AG04449 (cell line): ENCODE measurements at regions of chr2 and their contacts with region 1.

Region 1: GRCh38 chr2:70871398-70872211 is 36.0 kb upstream of the CD207 start:
- DNase-seq: no peak
- H3K4me3 ChIP-seq: no peak overlapping the region
- CTCF ChIP-seq: peak; percentile 99

Region 2: DNA sequence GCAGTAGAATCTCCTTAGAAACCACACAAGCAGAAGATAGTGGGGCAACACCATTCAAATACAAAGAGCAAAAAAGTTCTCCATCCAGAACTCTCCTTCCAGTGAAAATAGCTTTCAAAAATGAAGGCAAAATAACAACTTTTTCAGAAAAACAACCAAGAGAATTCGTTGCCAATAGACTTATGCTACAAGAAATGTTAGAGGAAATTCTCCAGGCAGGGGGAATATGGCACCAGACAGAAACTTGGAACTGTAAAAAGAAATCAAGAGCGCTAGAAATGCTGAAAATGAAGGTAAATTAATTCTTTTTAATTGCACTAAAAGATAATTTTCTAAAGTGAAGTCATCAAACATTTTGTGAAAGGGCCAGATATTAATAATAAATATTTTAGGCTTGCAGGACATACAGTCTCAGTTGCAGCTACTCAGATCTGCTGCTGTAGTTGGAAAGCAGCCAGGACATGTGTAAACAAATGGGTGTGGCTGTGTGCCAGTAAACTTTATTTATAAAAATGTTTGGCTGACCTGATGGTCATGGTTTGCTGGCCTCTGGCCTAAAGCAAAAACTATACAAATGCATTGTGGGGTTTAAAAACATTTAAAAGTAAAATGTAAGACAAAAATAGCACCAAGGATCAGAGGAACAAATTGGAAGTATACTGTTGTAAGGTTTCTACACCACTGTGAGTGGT is 244.2 kb before region 1 on chr2:
- CTCF ChIA-PET with region 1: no interaction called
- POLR2A ChIA-PET with region 1: no interaction called
- DNase-seq: no peak
- H3K4me3 ChIP-seq: no peak overlapping the region
- CTCF ChIP-seq: no peak

Region 3: GRCh38 chr2:70753902-70754301 is 117.7 kb before region 1 on chr2:
- CTCF ChIA-PET with region 1: no interaction called
- POLR2A ChIA-PET with region 1: no interaction called
- DNase-seq: no peak
- H3K4me3 ChIP-seq: no peak overlapping the region
- CTCF ChIP-seq: no peak

Region 4: GRCh38 chr2:70837980-70838925 is 33.4 kb before region 1 on chr2:
- CTCF ChIA-PET with region 1: no interaction called
- POLR2A ChIA-PET with region 1: no interaction called
- DNase-seq: no peak
- H3K4me3 ChIP-seq: no peak overlapping the region
- CTCF ChIP-seq: no peak

Region 5: GRCh38 chr2:70851704-70852103 is 19.9 kb before region 1 on chr2:
- CTCF ChIA-PET with region 1: interaction called, 44 read pairs
- POLR2A ChIA-PET with region 1: no interaction called
- DNase-seq: no peak
- H3K4me3 ChIP-seq: no peak overlapping the region
- CTCF ChIP-seq: no peak

Region 6: DNA sequence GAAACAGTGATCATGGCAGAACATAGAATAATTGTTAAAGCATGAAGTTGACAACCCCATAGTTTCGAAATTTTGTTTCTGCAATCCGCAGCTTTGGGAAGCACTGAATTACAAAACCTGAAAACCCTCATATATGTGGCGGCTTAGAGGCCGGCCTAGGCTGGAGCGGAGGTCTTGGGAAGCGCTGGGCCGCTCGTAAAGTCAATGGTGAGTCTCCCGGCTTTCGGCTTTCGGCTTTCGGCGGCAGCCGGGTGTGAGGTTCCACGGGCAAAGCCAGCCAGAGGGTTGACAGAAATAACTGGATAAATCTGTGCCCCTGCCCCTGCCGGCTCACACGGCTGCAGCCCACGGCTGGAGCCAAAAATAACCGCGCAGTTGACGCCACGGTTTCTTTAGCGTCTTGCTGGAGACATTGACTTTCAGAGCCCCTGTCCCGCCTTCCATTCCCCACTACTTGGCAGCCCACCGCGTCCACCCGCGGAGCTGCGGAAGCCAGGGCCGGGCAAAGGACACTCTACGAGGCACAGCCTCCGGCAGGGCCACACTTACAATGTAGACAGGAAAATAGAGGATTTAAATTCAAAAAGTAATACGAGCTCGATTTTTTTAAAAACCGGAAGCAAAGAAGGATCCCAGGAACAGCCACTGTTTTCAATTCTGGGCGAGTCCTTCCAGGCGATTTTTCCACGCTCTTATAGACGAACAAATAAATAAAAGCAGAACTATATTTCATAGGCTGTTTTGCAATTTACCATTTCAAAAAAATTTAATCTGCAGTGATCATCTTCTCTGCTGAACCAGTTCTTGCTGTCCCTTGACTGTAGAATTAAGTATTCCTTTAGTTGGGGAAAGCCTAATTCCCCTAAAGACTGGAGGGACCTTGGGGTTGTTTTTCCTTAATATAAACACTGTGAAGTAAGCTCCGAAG is 35.8 kb after region 1 on chr2:
- CTCF ChIA-PET with region 1: interaction called, 67 read pairs
- POLR2A ChIA-PET with region 1: no interaction called
- DNase-seq: no peak
- H3K4me3 ChIP-seq: no peak overlapping the region; the same call in 1 of the 2 replicates
- CTCF ChIP-seq: no peak

Region 7: GRCh38 chr2:70935468-70936164 is 64.0 kb after region 1 on chr2 and contains the start of gene ATP6V1B1:
- CTCF ChIA-PET with region 1: interaction called, 10 read pairs
- POLR2A ChIA-PET with region 1: no interaction called
- DNase-seq: no peak
- H3K4me3 ChIP-seq: no peak within 1 kb of the TSS
- CTCF ChIP-seq: no peak

Region 8: GRCh38 chr2:70959271-70959761 is 87.7 kb after region 1 on chr2:
- CTCF ChIA-PET with region 1: interaction called, 86 read pairs
- POLR2A ChIA-PET with region 1: no interaction called
- DNase-seq: no peak
- H3K4me3 ChIP-seq: no peak overlapping the region
- CTCF ChIP-seq: no peak

Region 9: DNA sequence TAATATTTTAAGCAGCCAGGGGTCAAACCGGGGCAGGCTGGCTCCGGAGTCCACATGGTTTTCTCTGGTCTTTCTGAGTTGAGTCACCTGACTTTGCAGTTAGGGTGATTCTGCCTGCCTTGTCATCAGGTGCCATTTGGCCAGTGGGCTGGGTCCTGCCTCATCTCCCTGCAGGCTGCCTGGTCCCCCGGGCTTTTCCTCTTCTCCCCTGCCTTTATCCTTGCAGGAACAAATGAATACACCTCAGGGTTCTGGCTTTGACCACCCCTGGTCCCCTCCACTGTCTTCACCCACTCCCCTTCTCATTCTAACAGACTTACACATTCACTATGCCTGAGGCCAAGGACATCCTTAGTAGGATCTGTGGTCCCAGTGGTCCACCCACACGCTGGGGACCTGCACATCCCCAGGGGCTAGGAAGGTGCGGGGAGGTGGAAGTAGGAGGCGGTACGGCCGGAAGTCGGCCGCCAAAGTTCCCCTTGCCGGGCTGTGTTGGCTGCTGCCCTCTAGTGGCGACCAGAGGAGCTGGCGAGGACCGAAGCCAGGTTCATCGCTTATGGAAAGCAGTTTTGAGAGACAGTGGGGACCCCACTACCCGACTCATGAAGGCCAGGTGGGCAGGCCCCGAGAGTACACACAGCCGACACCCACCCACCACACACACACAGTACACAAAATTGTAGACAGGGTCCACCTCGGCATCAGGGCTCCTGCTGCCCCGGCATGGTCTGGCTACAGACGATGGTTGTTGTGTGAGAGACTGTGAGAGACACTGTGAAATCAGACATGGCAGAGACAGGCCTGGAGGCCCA is 129.4 kb after region 1 on chr2:
- CTCF ChIA-PET with region 1: interaction called, 12 read pairs
- POLR2A ChIA-PET with region 1: no interaction called
- DNase-seq: no peak
- H3K4me3 ChIP-seq: peak overlapping the region; percentile 45
- CTCF ChIP-seq: peak; percentile 94

Region 10: GRCh38 chr2:71426721-71427120 is 555.1 kb after region 1 on chr2:
- CTCF ChIA-PET with region 1: no interaction called
- POLR2A ChIA-PET with region 1: no interaction called
- DNase-seq: no peak
- H3K4me3 ChIP-seq: no peak overlapping the region
- CTCF ChIP-seq: no peak